PC-9 (cell line): ENCODE measurements at regions of chr5 and their contacts with region 1.

Region 1: GRCh38 chr5:115415143-115415491 is 118.7 kb upstream of the CCDC112 start:
- DNase-seq: peak; percentile 56 to 88
- H3K4me3 ChIP-seq: no peak overlapping the region
- H3K27ac ChIP-seq: peak overlapping the region; percentile 69
- H3K4me1 ChIP-seq: peaks cover 36% of the 10 kb centered on the region
- H3K27me3 ChIP-seq: no peaks in the 10 kb centered on the region
- CTCF ChIP-seq: no peak

Region 2: DNA sequence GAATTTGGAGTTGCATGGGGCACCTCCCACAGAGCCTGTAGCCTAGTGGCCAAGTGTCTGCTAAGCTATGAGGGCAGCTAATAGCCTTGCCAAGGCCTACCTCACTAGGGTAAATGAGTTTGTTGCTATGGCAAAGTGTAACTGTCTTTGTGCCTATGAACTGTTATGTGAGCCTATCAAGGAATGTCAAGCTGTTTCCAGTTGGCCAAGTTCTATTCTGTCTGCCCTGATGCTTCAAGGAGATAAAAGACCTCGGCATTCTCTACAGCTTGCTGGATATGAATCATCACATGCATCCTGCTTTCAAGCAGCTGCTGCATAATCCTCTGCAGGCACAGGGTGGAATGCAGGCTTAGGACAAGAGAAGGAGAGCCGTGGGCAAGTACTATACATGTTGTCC is 48.9 kb before region 1 on chr5:
- CTCF ChIA-PET with region 1: interaction called, 3 read pairs
- POLR2A ChIA-PET with region 1: no interaction called
- intact Hi-C with region 1: loop called (anchors 5 kb)
- DNase-seq: peak; percentile 72 to 97
- H3K4me3 ChIP-seq: no peak overlapping the region
- H3K27ac ChIP-seq: no peak overlapping the region
- H3K4me1 ChIP-seq: peaks cover 21% of the 10 kb centered on the region
- H3K27me3 ChIP-seq: no peaks in the 10 kb centered on the region
- CTCF ChIP-seq: no peak

Region 3: DNA sequence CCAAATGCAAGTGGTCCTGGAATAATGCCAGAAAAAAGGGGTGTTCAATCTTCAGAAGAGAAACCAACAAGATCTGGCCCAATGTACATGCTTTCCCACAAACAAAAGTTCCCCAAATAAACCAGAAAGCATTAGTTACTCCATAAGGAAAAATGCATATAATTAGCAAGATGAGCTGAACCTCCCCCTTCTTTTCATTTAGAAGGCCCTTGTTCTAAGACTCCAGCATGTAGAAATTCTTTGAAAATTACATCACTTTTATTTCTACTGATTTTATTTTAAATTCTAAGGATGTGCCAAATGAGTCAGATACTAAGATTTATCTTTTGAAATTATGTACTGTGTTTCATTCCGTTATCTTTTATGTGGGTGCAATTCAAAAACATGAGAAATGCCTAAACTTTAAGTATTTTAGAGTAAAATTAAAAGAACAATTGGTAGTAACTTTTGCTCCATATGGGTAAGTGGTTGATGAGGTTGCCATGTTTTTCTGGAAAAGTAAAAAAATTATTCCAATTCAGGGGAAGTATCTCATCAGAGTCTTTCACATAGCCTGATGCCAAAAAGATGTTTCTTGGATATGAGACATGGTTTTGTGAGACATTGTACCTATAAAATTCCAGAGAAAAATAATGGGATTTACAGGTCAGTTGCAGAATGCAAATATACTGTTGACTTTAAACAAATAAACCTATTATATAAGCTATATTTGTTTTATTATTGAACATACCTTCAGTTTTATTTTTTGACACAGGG is 12.1 kb before region 1 on chr5:
- CTCF ChIA-PET with region 1: interaction called, 11 read pairs
- POLR2A ChIA-PET with region 1: no interaction called
- intact Hi-C with region 1: no loop called
- DNase-seq: no peak
- H3K4me3 ChIP-seq: no peak overlapping the region
- H3K27ac ChIP-seq: no peak overlapping the region
- H3K4me1 ChIP-seq: no peaks in the 10 kb centered on the region
- H3K27me3 ChIP-seq: no peaks in the 10 kb centered on the region
- CTCF ChIP-seq: no peak

Region 4: GRCh38 chr5:115460472-115460871 is 45.4 kb after region 1 on chr5:
- CTCF ChIA-PET with region 1: no interaction called
- POLR2A ChIA-PET with region 1: no interaction called
- intact Hi-C with region 1: loop called (anchors 5 kb)
- DNase-seq: peak; percentile 69 to 93
- H3K4me3 ChIP-seq: 0 out of 2 replicates have a peak overlapping the region, but pooled peaks have one; percentile 8
- H3K27ac ChIP-seq: peak overlapping the region; percentile 94
- H3K4me1 ChIP-seq: peaks cover 55% of the 10 kb centered on the region
- H3K27me3 ChIP-seq: no peaks in the 10 kb centered on the region
- CTCF ChIP-seq: no peak

Region 5: DNA sequence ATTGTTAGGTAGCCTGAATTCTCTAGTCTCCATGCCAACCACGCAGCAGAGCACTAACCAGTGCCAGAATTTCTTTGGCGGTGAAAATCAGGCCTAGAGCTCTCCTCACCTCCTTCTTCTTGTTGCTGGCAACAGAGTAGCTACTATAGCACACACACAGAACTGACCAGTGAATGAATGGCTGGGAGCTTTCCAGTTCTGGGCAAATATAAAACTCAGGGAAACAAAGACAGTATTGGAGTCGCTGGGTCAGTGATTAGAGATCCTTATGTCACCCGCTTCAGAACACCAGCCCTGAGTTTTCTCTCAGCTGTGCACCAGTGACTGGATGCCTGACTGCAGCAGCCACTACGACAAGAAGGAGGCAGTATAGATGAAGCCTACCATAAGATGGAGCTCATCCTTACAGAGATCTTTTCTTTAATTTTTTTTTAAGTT is 156.3 kb after region 1 on chr5:
- CTCF ChIA-PET with region 1: no interaction called
- POLR2A ChIA-PET with region 1: no interaction called
- intact Hi-C with region 1: no loop called
- DNase-seq: no peak
- H3K4me3 ChIP-seq: no peak overlapping the region
- H3K27ac ChIP-seq: no peak overlapping the region
- H3K4me1 ChIP-seq: peaks cover 9% of the 10 kb centered on the region
- H3K27me3 ChIP-seq: no peaks in the 10 kb centered on the region
- CTCF ChIP-seq: no peak

Region 6: DNA sequence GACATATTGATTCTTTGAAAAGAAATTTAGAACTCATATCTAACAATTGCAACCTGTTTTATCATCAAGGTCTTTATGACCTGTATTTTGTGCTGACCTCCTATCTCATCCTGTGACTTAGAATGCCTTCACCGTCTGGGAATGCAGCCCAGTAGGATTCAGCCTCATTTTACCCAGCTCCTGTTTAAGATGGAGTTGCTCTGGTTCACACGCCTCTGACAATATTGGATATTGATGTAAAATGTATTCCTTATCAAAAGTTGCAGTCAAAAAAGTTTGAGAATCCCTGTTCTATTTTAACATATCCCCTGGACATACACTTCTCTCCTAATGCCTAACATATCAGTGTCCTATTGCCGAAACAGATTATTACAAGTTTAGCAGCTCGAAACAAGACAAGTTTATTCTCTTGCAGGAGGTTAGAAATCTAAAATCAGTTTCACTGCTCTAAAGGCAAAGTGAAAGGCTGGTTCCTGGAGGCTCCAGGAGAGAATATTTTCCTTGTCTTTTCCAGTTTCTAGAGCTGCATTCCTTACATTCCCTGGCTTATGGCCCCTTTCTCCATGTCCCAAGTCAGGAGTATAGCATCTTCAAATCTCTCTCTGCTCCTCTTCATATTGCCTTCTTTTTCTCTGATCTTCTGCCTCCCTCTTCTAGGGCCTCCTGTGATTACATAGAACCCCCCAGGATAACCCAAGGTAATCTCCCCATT is 515.7 kb after region 1 on chr5:
- CTCF ChIA-PET with region 1: no interaction called
- POLR2A ChIA-PET with region 1: no interaction called
- intact Hi-C with region 1: no loop called
- DNase-seq: no peak
- H3K4me3 ChIP-seq: no peak overlapping the region
- H3K27ac ChIP-seq: peak overlapping the region; percentile 75
- H3K4me1 ChIP-seq: no peaks in the 10 kb centered on the region
- H3K27me3 ChIP-seq: no peaks in the 10 kb centered on the region
- CTCF ChIP-seq: no peak